Activated CD4-positive, alpha-beta T cell treated with anti-CD3 and anti-CD28 coated beads for 36 hours (primary cell): ENCODE measurements at regions of chr17 and their contacts with region 1.

Region 1: GRCh38 chr17:28133562-28133970 is 91.1 kb downstream of the NLK start:
- DNase-seq: no peak
- ATAC-seq: peak; percentile 58
- H3K4me3 Mint-ChIP-seq: no peak overlapping the region
- H3K27ac Mint-ChIP-seq: no peak overlapping the region
- H3K4me1 Mint-ChIP-seq: peaks cover 10% of the 10 kb centered on the region
- H3K27me3 Mint-ChIP-seq: no peaks in the 10 kb centered on the region

Region 2: DNA sequence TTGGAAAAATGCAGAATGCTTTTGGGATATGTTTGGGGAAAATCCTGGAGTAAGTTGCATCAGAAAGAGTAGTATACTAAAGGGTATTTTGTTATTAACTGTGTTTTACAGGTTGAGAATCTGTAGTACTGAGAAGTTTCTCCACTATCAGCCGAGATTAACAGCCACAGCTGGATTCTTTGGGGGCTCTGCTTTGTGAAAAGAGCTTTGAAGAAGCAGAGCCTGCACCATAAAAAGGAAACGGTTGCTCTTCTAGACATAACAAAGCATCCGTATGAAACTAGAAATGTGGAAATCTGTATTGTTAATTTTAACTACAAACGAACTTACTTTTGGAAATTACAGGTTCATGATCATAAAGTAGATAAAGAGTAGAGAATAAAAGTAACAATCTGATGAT is 85.8 kb before region 1 on chr17:
- CTCF ChIA-PET with region 1: no interaction called
- POLR2A ChIA-PET with region 1: no interaction called
- intact Hi-C with region 1: loop called (anchors 5 kb)
- DNase-seq: no peak
- ATAC-seq: no peak
- H3K4me3 Mint-ChIP-seq: no peak overlapping the region
- H3K27ac Mint-ChIP-seq: no peak overlapping the region
- H3K4me1 Mint-ChIP-seq: peaks cover 69% of the 10 kb centered on the region
- H3K27me3 Mint-ChIP-seq: no peaks in the 10 kb centered on the region